HEK293T (cell line): ENCODE measurements at regions of chr22 and their contacts with region 1.

Region 1: GRCh38 chr22:28800308-28801077 is at the start of gene XBP1:
- DNase-seq: peak; percentile 99

Region 2: GRCh38 chr22:28488825-28489224 is 311.7 kb before region 1 on chr22:
- CTCF ChIA-PET with region 1: no interaction called
- POLR2A ChIA-PET with region 1: no interaction called
- DNase-seq: no peak

Region 3: GRCh38 chr22:28600546-28601143 is 199.8 kb before region 1 on chr22:
- CTCF ChIA-PET with region 1: no interaction called
- POLR2A ChIA-PET with region 1: interaction called, 13 read pairs
- DNase-seq: peak; percentile 36

Region 4: DNA sequence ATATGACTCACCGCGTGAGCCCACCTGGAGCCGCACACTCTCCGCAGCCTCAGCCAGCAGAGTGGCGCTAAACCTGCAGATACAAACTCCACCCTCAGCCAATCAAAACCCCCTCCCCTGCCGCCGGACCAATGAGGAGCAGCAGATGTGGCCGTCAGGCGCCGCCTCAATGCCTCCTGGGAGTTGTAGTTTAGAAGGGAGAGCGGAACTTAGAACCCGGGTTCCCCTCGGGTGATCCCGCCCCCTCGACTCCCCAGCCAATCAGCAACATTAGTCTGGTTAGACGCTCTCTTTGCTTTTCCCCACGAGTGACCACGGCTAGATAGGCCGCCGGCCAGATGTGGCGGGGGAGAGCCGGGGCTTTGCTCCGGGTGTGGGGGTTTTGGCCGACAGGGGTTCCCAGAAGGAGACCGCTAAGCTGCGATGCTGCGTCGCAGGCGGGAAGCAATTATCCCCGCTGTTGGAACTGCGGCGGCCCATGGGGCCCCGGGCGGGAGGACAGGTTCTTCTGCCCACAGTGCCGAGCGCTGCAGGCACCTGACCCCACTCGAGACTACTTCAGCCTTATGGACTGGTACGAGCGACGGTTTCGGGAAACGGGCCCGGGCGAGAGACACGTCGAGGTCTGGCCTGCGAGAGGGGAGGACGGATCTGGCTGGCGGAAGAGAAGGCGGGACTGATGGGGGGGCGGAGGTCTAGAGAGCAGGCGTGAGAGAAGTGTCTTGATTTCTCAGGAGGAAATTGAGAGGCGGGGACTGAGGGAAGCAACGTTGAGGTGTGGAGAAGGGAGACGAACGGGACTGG is 58.5 kb before region 1 on chr22 and contains the starts of genes CHEK2 and HSCB:
- CTCF ChIA-PET with region 1: no interaction called
- POLR2A ChIA-PET with region 1: interaction called, 10 read pairs
- DNase-seq: peak; percentile 99

Region 5: DNA sequence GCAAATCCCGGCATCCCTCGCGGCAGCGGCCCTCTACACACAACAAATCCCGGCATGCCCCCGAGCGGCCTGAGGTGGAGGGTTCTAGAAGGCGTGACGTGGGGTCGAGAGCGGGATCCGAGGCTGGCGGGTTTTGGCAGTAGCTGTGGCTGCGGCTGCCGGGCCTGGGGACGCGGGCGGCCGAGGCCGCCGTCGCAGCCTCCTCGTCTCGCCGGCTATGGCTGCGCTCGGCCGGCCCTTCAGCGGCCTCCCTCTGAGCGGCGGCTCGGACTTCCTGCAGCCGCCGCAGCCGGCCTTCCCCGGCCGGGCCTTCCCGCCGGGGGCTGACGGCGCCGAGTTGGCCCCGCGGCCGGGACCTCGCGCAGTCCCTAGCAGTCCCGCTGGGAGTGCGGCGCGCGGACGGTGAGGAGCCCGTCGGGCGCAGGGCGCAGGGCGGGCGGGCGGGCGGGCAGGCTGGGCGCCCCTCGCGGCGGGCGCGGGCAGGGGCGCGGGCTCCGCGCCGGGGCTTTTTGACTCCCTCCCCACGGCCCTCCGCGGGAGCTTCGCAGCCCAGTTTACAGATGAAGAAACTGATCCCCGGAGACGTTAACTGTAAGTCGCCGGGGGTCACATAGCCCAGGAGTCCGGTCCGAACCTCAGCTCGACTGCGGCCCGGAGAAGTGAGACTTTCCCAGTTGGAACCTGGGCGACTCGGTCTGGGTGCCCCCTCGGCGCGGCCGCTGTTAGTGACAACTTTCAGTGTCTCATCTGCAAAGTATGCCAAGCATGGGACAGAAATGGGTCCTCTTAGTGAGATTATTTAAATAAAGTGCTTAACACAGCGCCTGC is 27.6 kb before region 1 on chr22 and contains the start of gene CCDC117:
- CTCF ChIA-PET with region 1: no interaction called
- POLR2A ChIA-PET with region 1: interaction called, 16 read pairs
- DNase-seq: peak; percentile 96

Region 6: GRCh38 chr22:28783786-28784671 is 16.5 kb before region 1 on chr22:
- CTCF ChIA-PET with region 1: no interaction called
- POLR2A ChIA-PET with region 1: interaction called, 23 read pairs
- DNase-seq: no peak

Region 7: GRCh38 chr22:28810821-28811491 is 10.5 kb after region 1 on chr22:
- CTCF ChIA-PET with region 1: no interaction called
- POLR2A ChIA-PET with region 1: interaction called, 48 read pairs
- DNase-seq: no peak

Region 8: DNA sequence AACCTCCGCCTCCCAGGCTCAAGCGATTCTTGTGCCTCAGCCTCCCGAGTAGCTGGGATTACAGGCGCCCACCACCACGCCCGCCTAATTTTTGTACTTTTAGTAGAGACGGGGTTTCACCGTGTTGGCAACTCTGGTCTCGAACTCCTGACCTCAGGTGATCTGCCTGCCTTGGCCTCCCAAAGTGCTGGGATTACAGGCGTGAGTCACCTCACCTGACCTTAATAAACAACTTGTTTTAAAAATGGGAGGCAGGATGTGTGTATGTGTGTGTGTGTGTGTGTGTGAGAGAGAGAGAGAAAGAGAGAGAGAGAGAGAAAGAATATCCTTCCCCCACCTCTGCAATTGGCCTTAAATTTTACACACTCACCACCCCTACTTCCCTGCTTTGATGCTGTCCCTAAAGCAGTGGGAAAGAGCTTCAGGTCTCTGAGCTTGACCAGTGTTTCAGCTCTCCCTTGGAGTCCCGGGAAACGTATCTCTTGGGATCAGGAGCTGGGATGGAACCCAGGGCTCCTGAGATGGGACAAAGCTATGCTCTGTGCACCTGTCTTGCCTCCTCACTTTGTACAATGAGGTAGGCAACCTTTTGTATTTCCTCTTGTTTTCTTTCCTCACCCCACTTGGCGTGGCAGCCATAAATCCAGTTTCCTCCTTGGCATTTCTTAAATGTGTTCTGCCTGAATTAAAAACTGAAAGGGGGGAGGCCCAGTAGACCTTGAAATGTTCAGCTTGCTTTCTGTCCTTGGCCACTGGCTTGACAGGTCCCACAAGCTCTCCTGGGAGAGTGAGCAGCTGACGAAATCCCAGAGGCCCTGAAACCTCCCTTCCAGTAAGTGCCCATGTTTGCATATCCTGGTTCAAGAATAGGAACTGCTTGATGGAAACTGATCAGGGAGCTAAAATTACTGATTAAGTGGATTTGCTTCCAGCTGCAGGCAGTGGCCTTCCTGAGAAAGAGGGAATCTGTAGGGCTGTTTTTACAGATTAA is 17.7 kb after region 1 on chr22:
- CTCF ChIA-PET with region 1: no interaction called
- POLR2A ChIA-PET with region 1: interaction called, 48 read pairs
- DNase-seq: no peak

Region 9: GRCh38 chr22:28976588-28976987 is 176.1 kb after region 1 on chr22:
- CTCF ChIA-PET with region 1: no interaction called
- POLR2A ChIA-PET with region 1: no interaction called
- DNase-seq: no peak